ENCODE measurements at regions of chr6 and their contacts with region 1.

Region 1: GRCh38 chr6:125053809-125054208 is 91.6 kb downstream of the RNF217 start:
- DNase-seq: no peak
- ATAC-seq: no peak
- H3K4me3 ChIP-seq: no peak overlapping the region
- H3K27ac ChIP-seq: no peak overlapping the region
- H3K4me1 ChIP-seq: peaks cover 19% of the 10 kb centered on the region
- H3K27me3 ChIP-seq: no peaks in the 10 kb centered on the region
- CTCF ChIP-seq: no peak

Region 2: GRCh38 chr6:125099211-125100073 is 45.6 kb after region 1 on chr6:
- intact Hi-C with region 1: loop called in 1 of 2 experiments (anchors 2 kb)
- DNase-seq: peak; percentile 57 to 78
- ATAC-seq: peak; percentile 80 to 95 (median 93)
- H3K4me3 ChIP-seq: peak overlapping the region; percentile 78
- H3K27ac ChIP-seq: no peak overlapping the region
- H3K4me1 ChIP-seq: no peaks in the 10 kb centered on the region
- H3K27me3 ChIP-seq: no peaks in the 10 kb centered on the region
- CTCF ChIP-seq: no peak

Measured in psoas muscle (tissue), 8 donors.